ENCODE measurements at regions of chr1 and their contacts with region 1.

Region 1: GRCh38 chr1:15835741-15836510 is 11.6 kb upstream of the SPEN start:
- DNase-seq: peak; percentile 90 to 98
- H3K4me3 ChIP-seq: peak overlapping the region; percentile 91
- H3K27ac ChIP-seq: peak overlapping the region; percentile 100
- H3K4me1 ChIP-seq: peaks cover 12% of the 10 kb centered on the region
- H3K27me3 ChIP-seq: no peaks in the 10 kb centered on the region
- CTCF ChIP-seq: no peak

Region 2: DNA sequence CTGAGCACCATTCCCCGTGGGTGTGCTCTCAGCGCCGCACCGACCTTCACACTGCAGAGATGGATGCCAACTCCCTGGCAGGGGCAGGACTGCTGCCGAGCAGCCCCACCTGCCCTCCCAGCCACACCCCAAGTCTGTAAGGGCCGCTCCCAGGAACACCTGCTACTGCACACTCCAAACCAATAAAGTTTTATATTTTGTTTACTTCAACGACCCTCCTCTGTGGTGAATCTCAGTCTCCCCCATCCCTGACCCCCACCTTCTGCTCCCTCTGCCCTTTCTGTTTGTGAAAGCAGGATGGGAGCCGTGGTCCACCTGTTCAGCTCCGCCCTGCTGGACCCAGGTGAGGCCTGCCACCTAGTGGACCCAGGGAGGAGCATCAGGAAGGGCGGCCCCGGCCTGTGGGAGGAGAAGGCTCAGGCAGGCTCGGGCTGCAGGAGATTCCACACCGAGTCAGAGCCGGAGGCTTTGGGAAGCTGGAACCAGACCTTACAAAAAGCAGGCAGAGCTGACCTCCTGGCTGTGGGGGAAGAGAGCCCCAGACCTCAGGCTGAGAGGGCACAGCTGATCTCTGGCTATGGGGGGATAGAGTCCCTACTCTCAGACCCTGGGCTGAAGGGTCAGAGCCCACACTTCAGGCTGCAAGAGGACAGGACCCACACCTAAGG is 94.6 kb before region 1 on chr1:
- CTCF ChIA-PET with region 1: no interaction called
- POLR2A ChIA-PET with region 1: interaction called, 16 read pairs
- intact Hi-C with region 1: no loop called
- DNase-seq: peak; percentile 63 to 88
- H3K4me3 ChIP-seq: no peak overlapping the region
- H3K27ac ChIP-seq: no peak overlapping the region
- H3K4me1 ChIP-seq: no peaks in the 10 kb centered on the region
- H3K27me3 ChIP-seq: no peaks in the 10 kb centered on the region
- CTCF ChIP-seq: peak; percentile 82

Region 3: DNA sequence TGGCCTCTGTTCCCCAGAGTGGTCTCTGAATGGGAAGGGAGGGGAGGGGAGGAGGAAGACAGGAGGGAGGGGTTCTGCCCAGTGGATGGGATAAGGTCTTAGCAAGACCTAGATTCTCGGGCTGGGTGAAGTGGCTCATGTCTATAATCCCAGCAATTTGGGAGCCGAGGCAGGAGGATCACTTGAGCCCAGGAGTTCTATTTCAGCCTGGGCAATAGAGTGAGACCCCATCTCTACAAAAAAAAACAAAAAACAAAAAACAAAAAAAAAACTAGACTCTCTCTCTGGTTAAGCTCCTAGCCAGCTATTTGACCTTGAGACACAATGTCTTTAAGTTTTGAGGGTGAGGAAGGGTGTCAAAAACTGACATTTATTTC is 39.9 kb before region 1 on chr1:
- CTCF ChIA-PET with region 1: interaction called, 17 read pairs
- POLR2A ChIA-PET with region 1: interaction called, 17 read pairs
- intact Hi-C with region 1: loop called (anchors 1 kb)
- DNase-seq: no peak
- H3K4me3 ChIP-seq: peak overlapping the region; percentile 27; the same call in 1 of the 2 replicates
- H3K27ac ChIP-seq: peak overlapping the region; percentile 100
- H3K4me1 ChIP-seq: peaks cover 71% of the 10 kb centered on the region
- H3K27me3 ChIP-seq: no peaks in the 10 kb centered on the region
- CTCF ChIP-seq: no peak

Region 4: GRCh38 chr1:15820478-15820877 is 15.4 kb before region 1 on chr1:
- CTCF ChIA-PET with region 1: interaction called, 9 read pairs
- POLR2A ChIA-PET with region 1: interaction called, 17 read pairs
- intact Hi-C with region 1: no loop called
- DNase-seq: peak; percentile 64 to 75
- H3K4me3 ChIP-seq: no peak overlapping the region
- H3K27ac ChIP-seq: 0 out of 2 replicates have a peak overlapping the region, but pooled peaks have one; percentile 19
- H3K4me1 ChIP-seq: no peaks in the 10 kb centered on the region
- H3K27me3 ChIP-seq: no peaks in the 10 kb centered on the region
- CTCF ChIP-seq: no peak

Region 5: DNA sequence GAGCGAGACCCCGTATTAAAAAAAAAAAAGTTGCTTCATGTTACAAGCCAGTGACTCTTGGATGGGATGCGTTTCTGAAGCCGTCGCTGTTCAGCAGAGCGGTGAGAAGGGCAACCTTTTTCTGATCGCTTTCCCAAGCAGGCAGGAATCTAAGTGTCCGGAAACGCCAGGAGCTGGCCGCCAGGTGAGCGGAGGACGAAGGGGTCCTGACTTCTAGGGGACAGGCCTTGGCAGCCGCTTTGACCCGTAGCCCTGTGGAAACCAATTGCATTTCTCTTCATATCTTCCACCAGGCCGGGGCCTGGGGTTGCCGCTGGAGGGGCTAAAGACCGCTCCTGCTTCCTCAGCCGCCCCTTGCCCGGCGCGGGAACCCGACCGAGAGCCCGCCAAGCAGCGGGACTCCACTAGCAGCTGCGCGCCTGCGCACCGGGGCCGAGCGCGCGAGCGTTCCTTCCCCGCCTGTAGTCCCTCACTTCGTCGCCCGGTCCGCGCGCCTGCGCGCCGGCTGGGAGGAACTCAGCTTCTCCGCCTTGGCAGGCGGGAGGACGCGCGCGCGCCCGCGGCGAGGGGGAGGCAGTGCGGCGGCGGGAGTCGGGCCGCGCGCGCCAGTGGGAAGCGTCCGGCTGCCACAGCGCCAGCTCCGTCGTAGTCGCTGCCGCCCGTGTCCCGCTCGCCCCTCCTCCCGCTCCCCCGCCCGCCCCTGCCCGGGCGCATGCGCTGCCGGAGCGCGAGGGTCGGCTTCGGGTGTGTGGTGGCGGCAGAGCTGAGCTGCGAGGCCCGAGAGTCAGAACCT is 11.4 kb after region 1 on chr1 and contains the start of gene SPEN:
- CTCF ChIA-PET with region 1: interaction called, 3 read pairs
- POLR2A ChIA-PET with region 1: interaction called, 12 read pairs
- intact Hi-C with region 1: loop called (anchors 1 kb)
- DNase-seq: peak; percentile 77 to 97
- H3K4me3 ChIP-seq: peak within 1 kb of the TSS; percentile 95
- H3K27ac ChIP-seq: peak within 1 kb of the TSS; percentile 90
- H3K4me1 ChIP-seq: peaks cover 20% of the 10 kb centered on the region
- H3K27me3 ChIP-seq: no peaks in the 10 kb centered on the region
- CTCF ChIP-seq: no peak
- total RNA-seq, gene SPEN: 44.9 and 46.8 TPM in 2 replicates

Region 6: DNA sequence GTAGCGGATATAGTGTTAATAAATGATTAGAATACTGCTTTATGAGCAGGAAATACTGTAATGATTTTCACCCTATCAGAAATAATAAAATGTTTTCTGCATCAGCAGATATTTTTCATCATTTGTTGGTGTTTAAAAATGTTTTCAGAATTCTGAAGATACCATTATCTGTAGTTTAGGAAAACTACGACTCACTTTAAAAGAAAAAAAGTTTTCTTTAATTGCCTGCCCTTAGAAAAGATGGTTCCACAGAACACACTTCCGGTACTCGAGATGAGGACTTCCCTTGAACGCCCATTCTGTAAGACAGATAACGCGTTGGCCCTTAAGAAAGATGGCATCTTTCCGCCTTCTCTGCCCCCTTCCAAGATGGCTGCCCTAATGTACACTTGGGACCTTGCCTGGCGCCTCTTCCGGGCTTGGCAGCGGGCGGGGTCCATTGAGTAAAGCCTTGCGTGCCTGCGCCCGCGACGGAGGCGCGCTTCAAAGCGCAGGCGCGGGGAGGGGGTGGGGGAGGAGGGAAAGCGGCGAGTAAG is 530.9 kb after region 1 on chr1 and contains the start of gene SZRD1:
- CTCF ChIA-PET with region 1: interaction called, 3 read pairs
- POLR2A ChIA-PET with region 1: interaction called, 28 read pairs
- intact Hi-C with region 1: no loop called
- DNase-seq: peak; percentile 92
- H3K4me3 ChIP-seq: peak within 1 kb of the TSS; percentile 59
- H3K27ac ChIP-seq: peak within 1 kb of the TSS; percentile 74
- H3K4me1 ChIP-seq: 0 out of 2 replicates have a peak, but pooled peaks cover 7% of the 10 kb centered on the region
- H3K27me3 ChIP-seq: no peaks in the 10 kb centered on the region
- CTCF ChIP-seq: no peak
- total RNA-seq, gene SZRD1: 104 and 114 TPM in 2 replicates